ENCODE measurements at regions of chr2 and their contacts with region 1.

Region 1: DNA sequence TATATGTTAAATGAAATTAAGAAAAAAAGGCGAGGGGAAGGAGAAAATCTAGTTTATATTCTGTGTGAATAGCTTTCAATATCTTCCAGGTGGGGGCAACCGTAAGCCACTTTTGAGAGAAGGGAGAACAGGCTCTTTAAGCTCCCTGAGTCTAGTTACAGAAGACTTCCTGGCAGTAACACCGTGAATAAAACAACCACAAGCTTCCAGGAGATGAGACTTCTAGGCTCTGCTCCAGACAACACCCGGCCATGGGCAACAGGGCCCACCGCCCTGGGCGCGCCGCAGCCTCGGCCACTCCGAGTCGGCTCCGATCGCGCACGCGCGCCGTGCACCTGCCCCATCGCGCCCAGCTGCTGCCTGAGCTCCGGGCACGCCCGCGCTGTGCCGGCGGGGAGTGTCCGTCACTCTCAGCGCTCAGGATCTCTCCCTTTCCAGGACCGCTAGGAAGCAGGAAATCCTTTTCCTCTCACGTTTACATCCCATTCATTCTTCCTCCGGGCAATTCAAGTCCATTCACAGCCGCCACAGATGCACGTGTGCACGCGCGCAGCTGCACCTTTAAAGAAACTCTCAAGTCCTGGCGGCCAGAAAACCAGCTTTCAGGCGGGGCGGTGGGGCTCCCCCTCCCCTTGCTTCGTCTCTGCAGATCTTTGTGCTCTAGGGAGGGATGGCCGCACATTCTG is 19.4 kb upstream of the PAX3 start:
- DNase-seq: peak; percentile 45 to 75
- H3K4me3 ChIP-seq: peak overlapping the region; percentile 23
- H3K4me1 ChIP-seq: no peaks in the 10 kb centered on the region; the same call in 1 of the 2 replicates
- H3K27me3 ChIP-seq: peaks cover 51% of the 10 kb centered on the region

Region 2: DNA sequence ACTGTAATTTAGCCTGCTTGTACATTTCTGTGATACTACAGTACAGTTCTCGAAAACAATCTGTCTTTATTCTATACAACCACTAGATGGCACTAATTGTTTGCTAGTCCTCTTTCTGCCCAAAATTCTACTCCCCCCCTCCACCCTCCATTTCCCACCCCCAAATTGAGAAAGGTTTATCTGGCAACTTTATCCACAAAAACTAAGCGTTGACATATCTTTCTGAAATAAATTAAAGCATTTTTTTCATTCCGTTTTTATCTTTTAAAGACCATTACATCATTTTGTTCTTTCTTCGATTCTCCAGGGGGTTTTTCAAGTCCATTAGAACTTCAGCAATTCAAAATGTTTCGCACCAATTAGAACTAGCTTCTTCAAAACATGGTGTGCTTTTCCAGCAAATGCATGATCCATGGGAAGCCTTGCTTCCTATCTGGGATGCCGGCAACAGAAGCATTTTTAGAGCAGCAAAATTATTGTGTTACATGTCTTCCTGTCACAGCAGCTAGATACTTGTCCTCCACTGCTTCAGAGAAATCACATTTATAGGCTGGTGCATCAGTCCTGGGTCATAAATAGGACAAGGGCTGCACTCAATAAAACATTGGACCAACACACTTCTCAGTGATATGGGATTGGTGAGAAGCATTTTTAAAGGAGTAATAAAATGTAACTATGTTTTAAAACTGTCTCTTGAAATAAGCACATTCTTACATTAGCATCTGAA is 260.7 kb before region 1 on chr2:
- in situ Hi-C with region 1: loop called (anchors 25 kb)
- DNase-seq: peak in 1 of 2 experiments; percentile 18
- H3K4me3 ChIP-seq: no peak overlapping the region
- H3K4me1 ChIP-seq: no peaks in the 10 kb centered on the region
- H3K27me3 ChIP-seq: peaks cover 21% of the 10 kb centered on the region

Region 3: DNA sequence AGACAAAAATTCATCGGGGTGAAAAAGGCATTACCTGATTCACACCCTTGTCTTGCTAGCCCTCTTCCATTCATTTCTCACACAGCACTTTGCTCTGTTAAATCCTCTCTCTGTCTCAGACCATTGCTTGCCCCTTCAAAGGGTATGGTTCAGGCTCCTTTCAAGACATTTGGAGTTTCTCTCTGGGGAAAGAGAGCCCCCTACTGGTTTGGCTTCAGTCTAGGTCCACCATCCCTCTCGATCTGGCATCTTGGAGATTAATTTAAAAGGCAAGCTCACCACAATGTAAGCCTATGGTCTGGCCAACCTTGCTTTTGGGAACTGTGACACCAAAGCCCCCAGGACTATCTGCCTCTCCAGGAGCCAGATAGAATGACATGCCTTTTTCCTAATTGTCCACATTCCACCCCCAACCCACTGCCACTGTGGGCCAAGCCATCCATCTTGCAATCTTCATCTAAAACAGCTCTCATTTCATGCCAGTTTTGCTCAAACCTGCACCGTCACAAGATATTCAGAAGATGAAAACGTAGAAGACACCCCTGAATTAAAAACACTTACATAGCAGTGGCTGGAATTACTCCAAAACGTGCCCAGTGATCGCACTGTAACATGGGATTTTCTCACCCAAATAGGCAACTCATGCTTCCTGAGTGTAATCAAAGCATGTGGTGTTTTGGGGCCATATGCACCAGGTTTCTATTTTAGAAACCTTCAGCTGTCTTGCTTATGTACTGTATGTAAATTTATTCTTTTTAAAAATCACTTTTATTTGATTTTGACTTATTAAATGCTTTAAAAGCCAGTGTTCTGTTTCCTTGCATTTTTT is 243.9 kb after region 1 on chr2:
- in situ Hi-C with region 1: loop called (anchors 25 kb)
- DNase-seq: peak; percentile 48 to 69
- H3K4me3 ChIP-seq: no peak overlapping the region
- H3K4me1 ChIP-seq: no peaks in the 10 kb centered on the region
- H3K27me3 ChIP-seq: no peaks in the 10 kb centered on the region

Region 4: GRCh38 chr2:222671259-222672067 is 353.3 kb after region 1 on chr2 and contains the start of gene MOGAT1:
- in situ Hi-C with region 1: no loop called
- DNase-seq: peak in 1 of 2 experiments; percentile 44
- H3K4me3 ChIP-seq: peak within 1 kb of the TSS; percentile 22
- H3K4me1 ChIP-seq: no peaks in the 10 kb centered on the region; the same call in 1 of the 2 replicates
- H3K27me3 ChIP-seq: peaks cover 22% of the 10 kb centered on the region

Measured in HAP-1 (cell line).